CD8-positive, alpha-beta memory T cell (primary cell): ENCODE measurements at regions of chrX and their contacts with region 1.

Region 1: GRCh38 chrX:49922291-49923241 is at the start of gene CLCN5:
- DNase-seq: peak; percentile 89 to 97 (median 92)
- H3K4me3 ChIP-seq: peak within 1 kb of the TSS; percentile 64
- H3K4me3 Mint-ChIP-seq: peak within 1 kb of the TSS; percentile 73 to 90 (median 81)
- H3K27ac ChIP-seq: peak within 1 kb of the TSS; percentile 51
- H3K27ac Mint-ChIP-seq: peak within 1 kb of the TSS; percentile 32 to 82 (median 67)
- H3K4me1 ChIP-seq: no peaks in the 10 kb centered on the region
- H3K4me1 Mint-ChIP-seq: peaks cover 8 to 12% (median 11%) of the 10 kb centered on the region in 3 donors
- H3K27me3 ChIP-seq: no peaks in the 10 kb centered on the region
- H3K27me3 Mint-ChIP-seq: peaks cover 0 to 6% of the 10 kb centered on the region in 2 donors
- total RNA-seq, gene CLCN5: 3.0 to 4.0 TPM

Region 2: DNA sequence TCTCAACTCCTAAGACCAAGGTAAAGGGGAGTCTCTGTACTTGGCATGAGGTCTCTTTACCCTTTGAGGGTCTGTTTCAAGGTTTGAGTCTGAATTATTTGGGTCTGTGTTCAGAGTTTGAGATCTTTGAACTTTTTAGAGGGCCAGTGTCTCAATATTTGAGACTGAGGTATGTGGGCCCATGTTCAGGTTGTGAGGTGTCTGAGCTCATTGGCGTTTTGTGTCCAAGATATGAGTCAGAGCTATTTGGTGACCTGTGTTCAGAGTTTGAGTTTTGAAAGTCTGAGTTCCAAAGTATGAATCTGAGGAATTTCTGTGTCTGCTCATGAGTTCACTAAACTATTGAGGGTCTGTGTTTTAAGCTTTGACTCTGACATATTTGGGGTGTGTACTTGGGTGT is 130.2 kb before region 1 on chrX:
- CTCF ChIA-PET with region 1: no interaction called
- POLR2A ChIA-PET with region 1: no interaction called
- DNase-seq: no peak
- H3K4me3 ChIP-seq: no peak overlapping the region
- H3K4me3 Mint-ChIP-seq: no peak overlapping the region
- H3K27ac ChIP-seq: no peak overlapping the region
- H3K27ac Mint-ChIP-seq: no peak overlapping the region
- H3K4me1 ChIP-seq: no peaks in the 10 kb centered on the region
- H3K4me1 Mint-ChIP-seq: no peaks in the 10 kb centered on the region
- H3K27me3 ChIP-seq: no peaks in the 10 kb centered on the region
- H3K27me3 Mint-ChIP-seq: peaks cover 1 to 9% of the 10 kb centered on the region in 2 donors

Region 3: DNA sequence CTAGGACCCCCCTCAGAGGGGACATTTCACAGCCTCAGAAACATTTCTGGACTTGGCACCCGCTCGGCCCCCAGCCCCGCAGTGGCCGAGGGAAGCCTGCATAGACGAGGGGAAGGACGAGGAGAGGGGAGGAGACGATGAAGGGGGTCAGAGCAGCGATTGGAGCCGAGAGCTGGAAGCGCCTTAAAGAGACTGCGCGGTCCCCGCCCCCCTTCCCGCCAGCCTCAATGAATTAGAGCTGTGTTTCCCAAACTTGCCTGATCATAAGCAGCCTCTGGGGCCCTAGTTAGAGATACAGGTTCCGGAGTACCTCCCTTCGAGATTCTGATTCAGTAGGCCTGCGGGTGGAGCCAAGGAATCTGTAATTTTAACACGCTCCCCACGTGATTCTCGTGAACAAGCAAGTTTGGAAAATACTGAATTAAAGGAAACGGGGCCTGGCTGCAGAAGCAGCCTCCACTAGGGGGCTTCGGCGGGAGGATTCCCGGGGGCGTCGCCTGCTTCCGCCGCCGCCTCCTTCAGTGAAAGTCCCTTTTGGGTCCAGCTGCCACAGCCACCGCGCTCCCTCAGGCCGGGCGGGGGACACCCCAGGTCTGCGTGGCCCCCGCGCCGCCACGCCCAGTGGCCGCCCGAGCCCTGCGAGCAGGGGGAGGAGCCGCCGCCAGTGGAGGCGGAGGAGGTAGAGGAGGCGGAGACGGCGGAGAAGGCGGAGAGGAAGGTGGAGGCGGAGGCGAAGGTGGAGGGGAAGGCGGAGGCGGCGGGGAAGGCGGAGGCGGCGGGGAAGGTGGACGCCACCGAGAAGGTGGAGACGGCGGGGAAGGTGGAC is 43.5 kb before region 1 on chrX and contains the start of gene USP27X:
- CTCF ChIA-PET with region 1: interaction called, 12 read pairs
- POLR2A ChIA-PET with region 1: interaction called, 3 read pairs
- DNase-seq: peak; percentile 74 to 88 (median 76)
- H3K4me3 ChIP-seq: peak within 1 kb of the TSS; percentile 60
- H3K4me3 Mint-ChIP-seq: peak within 1 kb of the TSS; percentile 77 to 90 (median 82)
- H3K27ac ChIP-seq: peak within 1 kb of the TSS; percentile 9
- H3K27ac Mint-ChIP-seq: peak within 1 kb of the TSS; percentile 66 to 92 (median 72)
- H3K4me1 ChIP-seq: peaks cover 18% of the 10 kb centered on the region
- H3K4me1 Mint-ChIP-seq: peaks cover 15 to 42% (median 22%) of the 10 kb centered on the region in 3 donors
- H3K27me3 ChIP-seq: no peaks in the 10 kb centered on the region
- H3K27me3 Mint-ChIP-seq: peaks cover 0 to 2% of the 10 kb centered on the region in 2 donors
- total RNA-seq, gene USP27X: 1.7 TPM

Region 4: DNA sequence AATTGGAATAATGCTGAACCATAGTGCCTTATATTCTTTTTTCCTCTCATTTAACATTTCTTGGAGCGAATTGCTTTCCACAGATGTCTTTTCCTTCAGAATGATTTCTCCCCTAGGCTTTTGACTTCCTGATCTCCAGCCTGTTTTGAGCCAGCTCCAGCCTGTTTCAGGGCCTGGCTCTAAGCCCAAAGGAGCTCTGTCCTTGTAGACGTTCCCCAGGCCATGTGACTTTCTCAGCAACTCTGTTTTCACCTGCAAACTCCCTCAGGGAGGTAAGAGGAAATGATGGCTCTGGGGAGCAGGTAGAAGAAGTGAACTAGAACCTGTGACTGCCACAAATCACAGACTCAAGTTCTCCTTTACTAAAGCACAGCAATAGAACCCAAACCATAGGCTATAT is 189.2 kb after region 1 on chrX:
- CTCF ChIA-PET with region 1: no interaction called
- POLR2A ChIA-PET with region 1: no interaction called
- DNase-seq: no peak
- H3K4me3 ChIP-seq: no peak overlapping the region
- H3K4me3 Mint-ChIP-seq: no peak overlapping the region
- H3K27ac ChIP-seq: no peak overlapping the region
- H3K27ac Mint-ChIP-seq: no peak overlapping the region
- H3K4me1 ChIP-seq: no peaks in the 10 kb centered on the region
- H3K4me1 Mint-ChIP-seq: no peaks in the 10 kb centered on the region
- H3K27me3 ChIP-seq: no peaks in the 10 kb centered on the region
- H3K27me3 Mint-ChIP-seq: peaks cover 10 to 18% of the 10 kb centered on the region in 2 donors